Mucosa of descending colon (tissue), 3 donors: ENCODE measurements at regions of chr11 and their contacts with region 1.

Region 1: DNA sequence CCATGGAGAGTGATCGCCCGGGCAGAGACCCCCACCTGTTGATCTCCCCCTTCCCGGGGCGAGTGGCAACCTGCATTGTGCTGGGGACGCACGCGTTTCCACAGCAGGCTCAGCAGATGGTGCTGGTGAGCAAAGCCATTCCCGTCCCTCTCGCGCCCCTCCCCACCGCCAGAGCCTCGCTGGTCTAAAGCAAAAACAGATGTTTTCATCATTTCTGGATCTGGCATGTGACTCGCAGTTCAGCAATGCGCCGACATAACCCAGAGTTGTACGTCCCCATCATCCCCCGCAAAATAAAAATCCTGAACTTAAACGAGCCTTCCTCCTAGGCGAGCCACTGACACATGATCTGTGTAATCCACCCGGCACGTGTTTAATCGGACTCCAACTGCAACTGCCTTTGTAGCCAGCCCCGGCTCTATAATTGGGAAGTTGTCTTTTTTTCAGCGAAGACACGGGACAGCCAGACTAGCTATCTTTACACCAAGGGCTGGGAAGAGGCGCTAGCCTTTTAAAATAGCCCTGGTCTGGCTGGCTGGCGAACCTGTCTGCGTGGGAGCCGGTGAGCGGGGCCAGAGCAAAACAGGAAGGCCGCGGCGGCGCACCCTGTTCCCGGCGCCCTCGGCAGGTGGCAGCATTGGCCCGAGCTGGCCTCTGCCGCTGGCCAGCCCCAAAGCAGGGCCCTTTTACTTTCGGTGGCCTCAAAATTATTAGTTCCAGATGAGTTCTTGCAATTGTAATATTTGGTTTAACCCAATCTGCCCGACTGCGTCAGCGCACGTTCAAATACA is 203.0 kb upstream of the SORL1-AS1 start:
- DNase-seq: peak; percentile 80 to 89 (median 85)
- ATAC-seq: peak; percentile 96
- H3K4me3 ChIP-seq: no peak overlapping the region
- H3K4me1 ChIP-seq: peaks cover 4% of the 10 kb centered on the region
- CTCF ChIP-seq: peak; percentile 83

Region 2: DNA sequence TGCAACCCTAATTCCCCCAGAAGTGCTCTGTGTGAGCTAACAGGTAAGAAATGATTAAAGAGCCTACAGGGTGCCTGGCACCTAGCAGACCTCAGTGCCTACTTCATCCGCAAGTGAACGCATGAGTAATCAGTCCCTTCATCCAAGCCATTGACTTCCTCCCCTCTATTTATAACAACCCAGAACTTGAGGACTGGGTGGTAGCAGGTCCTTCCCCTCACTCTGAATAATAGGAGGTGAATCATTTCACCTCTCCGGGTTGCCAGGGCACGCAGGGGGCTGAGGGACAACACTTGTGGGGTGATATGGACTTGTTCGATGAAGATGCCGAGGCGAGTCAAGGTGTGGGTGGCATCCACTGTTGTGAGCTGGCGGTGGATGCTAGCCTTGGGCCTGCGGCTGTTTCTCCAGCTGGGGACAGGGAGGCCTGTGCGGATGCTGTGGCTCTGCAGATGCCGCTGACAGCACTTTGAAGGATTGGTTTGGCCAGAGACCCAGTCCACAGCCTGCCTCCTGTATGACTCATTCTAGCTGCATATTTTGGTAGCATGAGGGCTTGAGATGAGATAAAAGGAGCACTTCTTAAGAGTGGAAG is 191.3 kb before region 1 on chr11:
- intact Hi-C with region 1: no loop called
- DNase-seq: peak in 2 of 3 donors; percentile 45 to 68
- ATAC-seq: no peak
- H3K4me3 ChIP-seq: no peak overlapping the region
- H3K4me1 ChIP-seq: peaks cover 29% of the 10 kb centered on the region
- CTCF ChIP-seq: no peak

Region 3: GRCh38 chr11:122101625-122102291 is 446.0 kb after region 1 on chr11:
- intact Hi-C with region 1: loop called (anchors 5 kb)
- DNase-seq: peak; percentile 25 to 39 (median 31)
- ATAC-seq: peak; percentile 47
- H3K4me3 ChIP-seq: no peak overlapping the region
- H3K4me1 ChIP-seq: no peaks in the 10 kb centered on the region
- CTCF ChIP-seq: no peak

Region 4: GRCh38 chr11:122202951-122203456 is 547.3 kb after region 1 on chr11:
- intact Hi-C with region 1: loop called (anchors 5 kb)
- DNase-seq: peak; percentile 39 to 69 (median 61)
- ATAC-seq: peak; percentile 89
- H3K4me3 ChIP-seq: no peak overlapping the region
- H3K4me1 ChIP-seq: peaks cover 8% of the 10 kb centered on the region
- CTCF ChIP-seq: peak; percentile 76

Region 5: GRCh38 chr11:122505304-122506006 is 849.7 kb after region 1 on chr11:
- intact Hi-C with region 1: loop called in 1 of 2 experiments (anchors 5 kb)
- DNase-seq: peak; percentile 56 to 72 (median 61)
- ATAC-seq: peak; percentile 82
- H3K4me3 ChIP-seq: no peak overlapping the region
- H3K4me1 ChIP-seq: no peaks in the 10 kb centered on the region
- CTCF ChIP-seq: peak; percentile 53